ENCODE measurements at regions of chr6 and their contacts with region 1.

Region 1: GRCh38 chr6:153032255-153032882 is 29.9 kb upstream of the MTRF1L start:
- DNase-seq: peak; percentile 66
- H3K4me3 ChIP-seq: no peak overlapping the region
- H3K27ac ChIP-seq: no peak overlapping the region
- H3K4me1 ChIP-seq: peaks cover 15% of the 10 kb centered on the region
- H3K27me3 ChIP-seq: no peaks in the 10 kb centered on the region
- CTCF ChIP-seq: peak in 1 of 2 donors; percentile 12
- POLR2A ChIP-seq: no peak

Region 2: GRCh38 chr6:152954443-152954842 is 77.9 kb before region 1 on chr6:
- CTCF ChIA-PET with region 1: interaction called, 72 read pairs
- POLR2A ChIA-PET with region 1: no interaction called
- dilution Hi-C with region 1: no loop called
- intact Hi-C with region 1: no loop called
- DNase-seq: no peak
- H3K4me3 ChIP-seq: no peak overlapping the region
- H3K27ac ChIP-seq: no peak overlapping the region
- H3K4me1 ChIP-seq: peaks cover 11% of the 10 kb centered on the region
- H3K27me3 ChIP-seq: no peaks in the 10 kb centered on the region
- CTCF ChIP-seq: peak in 1 of 2 donors; percentile 12
- POLR2A ChIP-seq: no peak

Region 3: DNA sequence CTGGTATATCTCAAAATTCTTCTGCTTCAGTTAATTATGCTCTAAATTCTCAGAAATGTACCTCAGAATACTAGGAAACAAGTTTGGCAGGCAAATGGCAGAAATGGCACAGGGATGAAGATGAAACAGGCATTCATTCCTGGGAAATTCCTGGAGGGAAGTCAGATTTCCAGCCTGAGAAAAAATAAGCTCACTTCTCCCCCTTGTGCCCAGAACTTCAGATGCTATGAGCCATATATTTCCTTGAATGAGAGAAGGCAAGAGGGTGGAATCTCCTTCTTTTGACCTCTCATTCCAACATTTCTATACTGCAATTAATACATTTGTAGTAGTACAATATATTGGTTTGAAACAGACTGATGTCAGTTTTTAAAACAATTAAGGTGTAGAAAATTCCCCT is 75.9 kb after region 1 on chr6:
- CTCF ChIA-PET with region 1: interaction called, 132 read pairs
- POLR2A ChIA-PET with region 1: no interaction called
- dilution Hi-C with region 1: no loop called
- intact Hi-C with region 1: loop called (anchors 1 kb)
- DNase-seq: peak; percentile 44
- H3K4me3 ChIP-seq: no peak overlapping the region
- H3K27ac ChIP-seq: no peak overlapping the region
- H3K4me1 ChIP-seq: no peaks in the 10 kb centered on the region
- H3K27me3 ChIP-seq: no peaks in the 10 kb centered on the region
- CTCF ChIP-seq: peak; percentile 38 to 43
- POLR2A ChIP-seq: no peak

Region 4: GRCh38 chr6:153210083-153210482 is 177.7 kb after region 1 on chr6:
- CTCF ChIA-PET with region 1: interaction called, 3 read pairs
- POLR2A ChIA-PET with region 1: no interaction called
- dilution Hi-C with region 1: no loop called
- intact Hi-C with region 1: loop called (anchors 1 kb)
- DNase-seq: no peak
- H3K4me3 ChIP-seq: no peak overlapping the region
- H3K27ac ChIP-seq: no peak overlapping the region
- H3K4me1 ChIP-seq: peaks cover 4% of the 10 kb centered on the region
- H3K27me3 ChIP-seq: peaks cover 0 to 8% of the 10 kb centered on the region in 2 experiments
- CTCF ChIP-seq: no peak
- POLR2A ChIP-seq: no peak

Region 5: DNA sequence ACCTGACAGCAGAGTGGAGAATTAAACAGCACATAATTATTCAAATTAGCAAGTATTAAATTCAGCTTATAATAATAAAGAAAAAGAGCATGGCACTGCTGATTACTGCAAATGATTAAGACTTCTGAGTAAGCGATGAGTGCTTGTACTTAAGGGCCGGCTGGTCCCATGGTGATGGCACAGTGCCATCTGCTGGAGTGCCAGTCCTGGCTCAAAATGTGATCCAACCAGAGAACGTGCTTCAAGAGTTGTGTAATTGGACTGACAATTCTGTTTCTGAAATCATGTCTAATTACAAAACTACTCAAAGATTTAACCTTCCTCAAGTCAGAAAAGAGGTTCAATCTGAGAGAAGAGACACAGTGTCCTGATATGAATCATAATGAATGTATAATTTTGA is 280.3 kb after region 1 on chr6:
- CTCF ChIA-PET with region 1: interaction called, 61 read pairs
- POLR2A ChIA-PET with region 1: no interaction called
- dilution Hi-C with region 1: no loop called
- intact Hi-C with region 1: loop called (anchors 1 kb)
- DNase-seq: peak; percentile 55
- H3K4me3 ChIP-seq: no peak overlapping the region
- H3K27ac ChIP-seq: no peak overlapping the region
- H3K4me1 ChIP-seq: no peaks in the 10 kb centered on the region
- H3K27me3 ChIP-seq: no peaks in the 10 kb centered on the region
- CTCF ChIP-seq: peak; percentile 32 to 34
- POLR2A ChIP-seq: no peak

Measured in endothelial cell of umbilical vein (primary cell).